ENCODE measurements at regions of chr3 and their contacts with region 1.

Region 1: GRCh38 chr3:179446501-179446900 is 4.8 kb downstream of the GNB4 start:
- DNase-seq: no peak
- ATAC-seq: no peak

Region 2: GRCh38 chr3:179309225-179310078 is 137.0 kb before region 1 on chr3:
- intact Hi-C with region 1: no loop called
- DNase-seq: no peak
- ATAC-seq: no peak

Region 3: DNA sequence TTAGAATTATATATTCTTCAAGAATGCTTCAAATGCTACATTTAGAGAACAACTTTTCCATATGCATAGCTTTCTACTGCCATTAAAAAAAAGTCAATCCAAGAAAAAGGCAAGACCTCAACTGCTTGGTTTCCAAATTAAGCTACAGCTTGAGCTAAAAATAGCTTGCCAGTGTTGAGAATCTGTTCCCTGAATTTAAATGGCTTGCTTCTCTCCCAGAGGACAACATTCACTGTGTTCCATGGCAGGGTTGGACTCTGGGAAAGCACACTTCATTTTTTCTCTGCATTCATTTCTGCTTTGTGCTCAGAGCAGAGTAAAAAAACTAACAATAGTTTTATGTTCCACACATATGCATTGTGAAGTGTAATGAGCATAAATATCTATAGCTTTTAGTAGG is 65.9 kb after region 1 on chr3:
- intact Hi-C with region 1: no loop called
- DNase-seq: no peak
- ATAC-seq: no peak

Region 4: DNA sequence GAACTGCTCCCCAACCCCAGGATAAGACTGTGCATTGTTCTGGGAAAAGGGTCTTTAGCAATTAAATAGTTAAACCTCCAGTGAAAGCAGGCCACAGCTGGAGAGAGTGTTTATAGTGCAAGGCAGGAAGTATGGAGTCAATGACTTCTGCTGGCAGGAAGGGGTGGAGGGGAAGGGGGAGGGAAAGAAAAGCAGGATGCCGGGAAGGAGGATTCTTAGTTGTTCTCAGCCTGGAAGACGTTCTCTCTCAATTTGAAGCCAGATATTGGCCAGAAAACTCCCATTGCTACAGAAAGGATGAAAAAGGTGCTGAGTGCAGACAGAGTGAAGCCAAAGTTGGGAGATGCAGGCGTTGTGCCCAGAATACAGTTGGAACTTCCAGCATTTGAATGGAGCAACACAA is 80.5 kb after region 1 on chr3:
- intact Hi-C with region 1: loop called (anchors 5 kb)
- DNase-seq: no peak
- ATAC-seq: peak; percentile 98

Measured in Right ventricle myocardium inferior (tissue), 1 donor.